ENCODE measurements at regions of chr10 and their contacts with region 1.

Region 1: GRCh38 chr10:122461367-122461728 is at the start of gene HTRA1:
- DNase-seq: peak; percentile 70
- H3K4me3 ChIP-seq: peak within 1 kb of the TSS; percentile 71 to 99 (median 96)
- H3K27ac ChIP-seq: peak within 1 kb of the TSS; percentile 65
- H3K4me1 ChIP-seq: peaks cover 27% of the 10 kb centered on the region
- H3K27me3 ChIP-seq: no peaks in the 10 kb centered on the region
- CTCF ChIP-seq: no peak
- total RNA-seq, gene HTRA1: 179 to 311 TPM

Region 2: GRCh38 chr10:122402548-122403131 is 58.7 kb before region 1 on chr10:
- CTCF ChIA-PET with region 1: no interaction called
- dilution Hi-C with region 1: no loop called
- in situ Hi-C with region 1: no loop called
- intact Hi-C with region 1: no loop called
- DNase-seq: no peak
- H3K4me3 ChIP-seq: no peak overlapping the region
- H3K27ac ChIP-seq: no peak overlapping the region
- H3K4me1 ChIP-seq: no peaks in the 10 kb centered on the region
- H3K27me3 ChIP-seq: no peaks in the 10 kb centered on the region
- CTCF ChIP-seq: no peak

Region 3: DNA sequence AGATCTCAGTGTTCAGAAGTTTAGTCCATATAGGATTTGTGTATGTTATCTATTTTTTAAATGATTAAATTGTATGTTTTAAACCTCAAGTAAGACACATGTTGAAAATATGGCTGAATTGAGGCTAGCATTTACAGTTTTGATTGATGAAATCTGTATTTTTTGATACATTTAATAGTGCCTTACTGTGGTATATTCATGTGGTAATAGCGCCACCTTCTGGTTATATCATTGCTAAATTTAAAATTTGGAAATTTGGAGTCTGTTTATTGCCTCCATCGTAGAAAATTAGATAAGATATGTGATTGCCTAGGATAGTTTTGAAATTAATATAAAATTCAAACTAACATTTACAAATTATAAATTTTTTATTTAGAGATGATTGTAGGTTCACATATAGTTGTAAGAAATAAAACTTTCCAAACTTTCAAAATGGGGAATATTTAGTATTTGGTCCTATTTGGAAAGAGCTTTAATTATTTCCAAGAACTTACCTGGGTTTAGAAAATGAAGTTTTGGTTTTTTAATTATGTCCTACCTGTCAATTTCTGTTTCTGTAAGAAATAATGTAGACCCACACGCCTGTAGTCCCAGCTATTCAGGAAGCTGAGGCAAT is 26.0 kb before region 1 on chr10:
- CTCF ChIA-PET with region 1: no interaction called
- dilution Hi-C with region 1: no loop called
- in situ Hi-C with region 1: no loop called
- intact Hi-C with region 1: no loop called
- DNase-seq: no peak
- H3K4me3 ChIP-seq: no peak overlapping the region
- H3K27ac ChIP-seq: no peak overlapping the region
- H3K4me1 ChIP-seq: no peaks in the 10 kb centered on the region
- H3K27me3 ChIP-seq: no peaks in the 10 kb centered on the region
- CTCF ChIP-seq: peak; percentile 44 to 54

Region 4: DNA sequence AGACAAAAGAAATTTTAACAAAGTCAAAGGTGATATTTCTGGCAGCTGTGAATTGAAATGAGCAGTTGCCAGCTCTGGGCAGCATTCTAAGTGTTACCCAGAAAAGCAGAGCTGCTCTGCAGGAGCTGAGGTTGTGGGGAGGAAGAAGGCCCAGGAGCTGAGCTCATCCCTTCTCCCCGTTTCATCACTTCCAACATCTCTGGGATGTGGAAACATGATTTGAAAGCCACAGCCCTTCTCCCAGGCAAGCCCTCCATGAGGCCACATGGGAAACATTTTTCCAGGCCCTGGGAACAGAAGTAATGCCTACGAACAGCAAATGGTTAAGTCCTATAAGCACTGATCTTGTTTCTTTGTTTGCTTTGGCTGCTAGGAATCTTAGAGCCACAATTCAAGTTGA is 88.3 kb after region 1 on chr10:
- CTCF ChIA-PET with region 1: no interaction called
- dilution Hi-C with region 1: no loop called
- in situ Hi-C with region 1: no loop called
- intact Hi-C with region 1: loop called (anchors 5 kb)
- DNase-seq: no peak
- H3K4me3 ChIP-seq: no peak overlapping the region
- H3K27ac ChIP-seq: no peak overlapping the region
- H3K4me1 ChIP-seq: no peaks in the 10 kb centered on the region
- H3K27me3 ChIP-seq: no peaks in the 10 kb centered on the region
- CTCF ChIP-seq: no peak

Measured in mammary epithelial cell (primary cell).